Cardiac septum (tissue), 1 donor: ENCODE measurements at regions of chr1 and their contacts with region 1.

Region 1: GRCh38 chr1:177959811-177960515 is 9.9 kb downstream of the SEC16B start:
- DNase-seq: no peak

Region 2: GRCh38 chr1:178037503-178038253 is 77.7 kb after region 1 on chr1:
- intact Hi-C with region 1: loop called (anchors 5 kb)
- DNase-seq: peak; percentile 94